IMR-90 (cell line): ENCODE measurements at regions of chr4 and their contacts with region 1.

Region 1: DNA sequence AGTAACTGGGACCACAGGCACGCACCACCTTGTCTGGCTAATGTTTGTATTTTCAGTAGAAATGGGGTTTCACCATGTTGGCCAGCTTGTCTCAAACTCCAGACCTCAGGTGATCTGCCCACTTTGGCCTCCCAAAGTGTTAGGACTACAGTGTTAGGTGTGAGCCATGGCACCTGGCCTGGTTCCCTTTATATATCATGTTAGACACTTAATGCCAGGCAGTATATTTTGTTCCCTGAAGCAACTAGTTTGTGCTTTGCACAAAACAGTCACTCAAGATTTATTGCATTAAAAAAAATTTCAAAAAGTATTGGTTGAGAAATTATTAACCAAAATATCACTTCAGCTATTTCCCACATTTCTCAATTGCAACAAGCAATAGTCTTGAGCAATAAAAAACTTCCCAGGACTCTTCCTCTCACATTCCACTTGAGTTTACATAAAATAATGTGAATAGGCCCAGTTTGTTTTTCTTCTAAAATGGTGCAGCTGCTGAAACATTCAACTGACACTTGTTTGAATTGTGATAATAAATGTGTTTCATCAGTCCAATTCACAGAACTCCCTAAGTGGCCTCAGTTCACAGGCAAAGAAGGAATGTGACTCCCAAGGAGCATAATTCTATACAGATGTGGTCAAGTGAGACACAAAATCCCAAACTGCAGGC is 22.7 kb downstream of the CXCL1 start:
- DNase-seq: peak; percentile 92
- ATAC-seq: peak; percentile 73
- H3K4me3 ChIP-seq: no peak overlapping the region
- H3K27ac ChIP-seq: peak overlapping the region; percentile 73
- H3K4me1 ChIP-seq: peaks cover 9% of the 10 kb centered on the region
- H3K27me3 ChIP-seq: peaks cover 2% of the 10 kb centered on the region; the same call in 1 of the 2 replicates
- CTCF ChIP-seq: no peak
- POLR2A ChIP-seq: no peak
- RAD21 ChIP-seq: no peak

Region 2: DNA sequence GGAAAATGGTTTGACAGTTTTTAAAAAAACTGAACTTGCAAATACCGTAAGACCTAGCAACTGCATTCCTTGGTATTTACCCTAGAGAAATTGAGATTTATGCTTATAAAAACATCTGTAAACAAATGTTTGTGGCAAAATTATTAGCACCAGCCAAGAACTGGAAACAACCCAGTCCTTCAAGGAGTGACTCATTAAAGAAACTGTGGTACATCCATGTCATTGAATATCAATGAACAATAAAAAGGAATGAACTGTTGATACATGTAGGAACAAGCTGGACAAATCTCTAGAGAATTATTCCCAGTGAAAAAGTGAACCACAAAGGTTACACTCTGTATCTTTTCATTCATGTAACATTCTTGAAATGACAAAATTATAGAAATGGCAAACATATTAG is 1082.7 kb before region 1 on chr4:
- CTCF ChIA-PET with region 1: no interaction called
- POLR2A ChIA-PET with region 1: no interaction called
- dilution Hi-C with region 1: no loop called
- in situ Hi-C with region 1: no loop called
- intact Hi-C with region 1: no loop called
- DNase-seq: no peak
- ATAC-seq: no peak
- H3K4me3 ChIP-seq: no peak overlapping the region
- H3K27ac ChIP-seq: no peak overlapping the region
- H3K4me1 ChIP-seq: no peaks in the 10 kb centered on the region
- H3K27me3 ChIP-seq: no peaks in the 10 kb centered on the region
- CTCF ChIP-seq: no peak
- POLR2A ChIP-seq: no peak
- RAD21 ChIP-seq: no peak

Region 3: GRCh38 chr4:73917081-73917501 is 25.2 kb after region 1 on chr4:
- CTCF ChIA-PET with region 1: no interaction called
- POLR2A ChIA-PET with region 1: no interaction called
- dilution Hi-C with region 1: no loop called
- in situ Hi-C with region 1: no loop called
- intact Hi-C with region 1: loop called (anchors 2 kb)
- DNase-seq: peak; percentile 96
- ATAC-seq: peak; percentile 94
- H3K4me3 ChIP-seq: no peak overlapping the region
- H3K27ac ChIP-seq: no peak overlapping the region; the same call in 1 of the 2 replicates
- H3K4me1 ChIP-seq: peaks cover 17% of the 10 kb centered on the region
- H3K27me3 ChIP-seq: peaks cover 24% of the 10 kb centered on the region
- CTCF ChIP-seq: no peak
- POLR2A ChIP-seq: no peak
- RAD21 ChIP-seq: no peak